Posterior vena cava (tissue), 2 donors: ENCODE measurements at regions of chr3 and their contacts with region 1.

Region 1: DNA sequence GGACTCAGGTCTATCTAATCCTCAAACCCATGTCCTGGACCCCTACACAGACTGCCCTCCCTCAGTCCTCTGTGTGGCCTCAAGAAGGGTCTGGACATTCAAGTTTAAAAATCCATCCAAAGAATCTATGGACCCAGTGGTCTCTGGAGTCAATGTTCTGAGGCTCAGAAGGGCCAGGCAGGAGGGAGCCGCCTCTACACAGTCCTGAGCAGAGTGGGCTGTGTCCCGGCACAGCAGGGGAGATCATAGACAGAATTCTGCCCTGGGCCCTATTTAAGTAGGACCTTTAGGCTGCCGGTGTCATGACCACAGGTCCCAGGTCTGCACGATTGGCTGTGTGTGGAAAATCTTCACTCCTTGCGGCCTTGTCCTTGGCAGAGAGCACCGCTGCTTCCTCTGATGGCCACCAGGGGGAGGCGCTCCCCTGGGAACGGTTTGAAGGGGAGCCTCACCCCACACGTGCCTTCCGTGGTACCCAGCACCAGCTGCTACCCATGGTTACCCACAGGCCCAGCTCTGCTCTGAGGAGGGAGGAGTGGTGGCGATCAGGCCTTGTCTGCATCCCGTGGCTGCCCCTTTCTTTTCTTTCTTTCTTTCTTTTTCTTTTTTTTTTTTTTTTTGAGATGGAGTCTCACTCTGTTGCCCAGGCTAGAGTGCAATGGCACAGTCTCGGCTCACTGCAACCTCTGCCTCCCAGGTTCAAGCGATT is 37.9 kb downstream of the CHRD start:
- DNase-seq: peak; percentile 89

Region 2: GRCh38 chr3:184490981-184491576 is 73.3 kb after region 1 on chr3:
- intact Hi-C with region 1: no loop called
- DNase-seq: no peak

Region 3: DNA sequence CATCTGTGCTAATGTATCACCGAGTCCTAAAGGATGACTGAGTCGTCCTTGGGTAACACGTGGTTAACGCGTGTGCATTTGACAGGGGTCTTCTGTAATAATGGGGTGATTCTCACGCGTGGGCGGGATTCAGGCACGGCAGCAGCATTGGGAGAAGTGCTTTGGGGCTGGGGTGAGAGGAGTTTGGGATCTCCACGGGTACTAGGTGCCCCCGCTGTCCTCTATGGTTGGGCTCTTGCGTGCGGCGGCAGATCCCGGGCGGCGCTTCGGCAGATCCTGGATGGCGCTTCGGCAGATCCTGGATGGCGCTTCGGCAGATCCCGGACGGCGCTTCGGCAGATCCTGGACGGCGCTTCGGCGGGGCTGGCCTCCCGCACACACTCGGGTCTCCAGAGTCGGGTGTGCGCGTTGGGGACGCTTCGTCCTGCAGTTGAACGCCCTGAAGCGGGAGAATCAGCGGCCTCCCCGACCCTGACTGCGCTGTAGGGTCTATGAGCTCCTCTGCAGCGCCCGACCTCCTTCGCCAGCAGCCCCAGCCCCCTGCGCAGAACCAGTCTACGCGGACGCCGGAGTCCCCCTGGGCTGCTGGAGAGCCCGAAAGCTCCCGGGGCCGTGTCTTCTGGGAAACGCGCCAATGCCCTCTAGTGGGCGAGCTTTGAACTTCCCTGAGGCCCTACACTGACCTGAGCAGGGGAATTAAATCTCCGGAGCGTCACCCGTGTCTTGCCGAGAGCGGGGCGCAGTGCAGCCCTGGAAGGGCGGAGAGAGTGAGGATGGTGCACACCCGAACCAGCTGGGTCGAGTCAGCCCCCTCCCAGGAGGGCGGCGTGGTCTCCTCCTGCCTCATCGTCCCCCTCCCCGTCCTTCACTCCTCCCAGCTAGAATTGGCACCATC is 95.8 kb after region 1 on chr3:
- intact Hi-C with region 1: loop called in 1 of 2 experiments (anchors 5 kb)
- DNase-seq: peak; percentile 95